Breast epithelium (tissue), 4 donors: ENCODE measurements at regions of chr12 and their contacts with region 1.

Region 1: DNA sequence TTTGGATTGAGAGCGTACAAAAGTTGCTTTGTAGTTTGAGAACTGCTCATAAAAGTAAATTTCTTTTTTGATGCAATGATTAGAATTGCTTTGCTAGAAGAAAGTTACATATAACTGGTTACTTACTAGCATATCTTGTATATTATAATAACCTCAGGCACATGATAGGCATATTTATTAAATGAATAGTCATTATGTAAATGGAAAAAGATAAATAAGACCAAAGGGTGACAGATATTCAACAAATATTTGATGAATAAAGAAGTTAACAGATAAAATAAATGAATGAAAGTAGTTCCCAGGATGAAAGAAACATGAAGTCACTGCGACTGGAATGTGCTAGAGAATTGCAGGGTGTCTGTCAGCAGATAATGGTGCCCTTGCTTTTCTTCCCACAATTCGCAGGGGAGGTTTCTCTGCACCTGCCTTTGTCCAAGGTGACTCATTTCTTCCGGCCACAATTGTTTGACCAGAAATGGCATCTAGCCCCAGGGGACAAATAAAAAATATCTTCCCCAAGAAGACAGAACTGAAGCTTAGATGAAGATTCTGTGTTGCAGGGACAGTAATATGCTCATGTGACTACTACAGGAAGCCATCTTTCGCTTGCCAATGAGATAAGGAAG is 315.9 kb upstream of the TBX3 start:
- DNase-seq: no peak
- H3K4me3 ChIP-seq: no peak overlapping the region
- H3K27ac ChIP-seq: peak overlapping the region in 1 of 2 donors; percentile 40
- H3K4me1 ChIP-seq: no peaks in the 10 kb centered on the region
- H3K27me3 ChIP-seq: no peaks in the 10 kb centered on the region
- CTCF ChIP-seq: no peak
- POLR2A ChIP-seq: no peak

Region 2: GRCh38 chr12:116434155-116435011 is 1434.5 kb after region 1 on chr12:
- intact Hi-C with region 1: loop called (anchors 10 kb)
- DNase-seq: peak; percentile 80 to 94
- H3K4me3 ChIP-seq: peak overlapping the region; percentile 17 to 50 (median 32)
- H3K27ac ChIP-seq: peak overlapping the region; percentile 78 to 87
- H3K4me1 ChIP-seq: peaks cover 9 to 11% of the 10 kb centered on the region in 2 donors
- H3K27me3 ChIP-seq: no peaks in the 10 kb centered on the region
- CTCF ChIP-seq: peak in 1 of 3 donors; percentile 10
- POLR2A ChIP-seq: no peak